Panc1 (cell line): ENCODE measurements at regions of chr11 and their contacts with region 1.

Region 1: GRCh38 chr11:25981998-25982397 is 349.9 kb upstream of the ANO3 start:
- DNase-seq: peak; percentile 24
- ATAC-seq: peak; percentile 81
- H3K4me3 ChIP-seq: no peak overlapping the region
- H3K27ac ChIP-seq: no peak overlapping the region
- H3K4me1 ChIP-seq: no peaks in the 10 kb centered on the region
- H3K27me3 ChIP-seq: no peaks in the 10 kb centered on the region
- CTCF ChIP-seq: peak; percentile 68

Region 2: DNA sequence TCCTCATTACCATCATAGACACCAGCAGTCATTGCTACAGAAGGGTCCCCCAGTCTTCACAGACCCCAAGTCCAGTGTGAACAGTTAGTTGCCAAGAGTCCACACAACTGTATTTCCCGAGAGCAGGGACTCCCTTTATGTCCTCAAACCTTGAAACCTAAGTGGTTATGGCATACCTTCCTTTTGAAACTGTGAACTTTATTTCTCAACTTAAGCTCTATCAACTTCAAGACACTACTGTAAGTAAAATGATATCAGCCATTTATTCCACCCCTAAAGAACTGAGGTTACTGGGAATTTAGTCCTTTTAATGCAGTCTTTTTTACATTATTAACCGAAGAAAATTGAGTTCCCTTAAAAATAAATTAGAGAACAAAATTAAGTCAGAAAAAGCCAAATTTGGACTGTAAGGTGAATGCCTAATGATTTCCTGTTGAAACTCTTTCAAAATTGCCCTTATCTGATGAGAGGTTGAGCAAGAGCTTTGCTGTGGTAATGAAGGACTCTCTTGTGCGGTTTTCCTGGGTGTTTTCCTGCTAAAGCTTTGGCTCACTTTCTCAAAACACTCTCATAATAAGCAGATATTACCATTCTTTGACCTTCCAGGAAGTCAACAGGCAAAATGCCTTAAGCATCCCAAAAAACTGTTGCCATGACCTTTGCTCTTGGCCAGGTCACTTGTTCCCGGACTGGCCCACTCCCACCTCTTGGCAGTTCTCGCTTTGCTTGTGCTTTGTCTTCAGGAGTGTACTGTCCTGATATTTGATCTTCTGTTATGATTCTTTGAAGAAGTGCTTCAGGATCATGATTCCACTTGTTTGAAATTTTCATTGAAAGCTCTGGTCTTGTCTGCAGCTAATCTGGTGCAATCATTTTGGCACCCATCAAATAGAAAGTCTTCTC is 415.4 kb before region 1 on chr11:
- CTCF ChIA-PET with region 1: no interaction called
- POLR2A ChIA-PET with region 1: no interaction called
- in situ Hi-C with region 1: no loop called
- intact Hi-C with region 1: no loop called
- DNase-seq: no peak
- ATAC-seq: no peak
- H3K4me3 ChIP-seq: no peak overlapping the region
- H3K27ac ChIP-seq: no peak overlapping the region
- H3K4me1 ChIP-seq: no peaks in the 10 kb centered on the region
- H3K27me3 ChIP-seq: no peaks in the 10 kb centered on the region
- CTCF ChIP-seq: no peak

Region 3: DNA sequence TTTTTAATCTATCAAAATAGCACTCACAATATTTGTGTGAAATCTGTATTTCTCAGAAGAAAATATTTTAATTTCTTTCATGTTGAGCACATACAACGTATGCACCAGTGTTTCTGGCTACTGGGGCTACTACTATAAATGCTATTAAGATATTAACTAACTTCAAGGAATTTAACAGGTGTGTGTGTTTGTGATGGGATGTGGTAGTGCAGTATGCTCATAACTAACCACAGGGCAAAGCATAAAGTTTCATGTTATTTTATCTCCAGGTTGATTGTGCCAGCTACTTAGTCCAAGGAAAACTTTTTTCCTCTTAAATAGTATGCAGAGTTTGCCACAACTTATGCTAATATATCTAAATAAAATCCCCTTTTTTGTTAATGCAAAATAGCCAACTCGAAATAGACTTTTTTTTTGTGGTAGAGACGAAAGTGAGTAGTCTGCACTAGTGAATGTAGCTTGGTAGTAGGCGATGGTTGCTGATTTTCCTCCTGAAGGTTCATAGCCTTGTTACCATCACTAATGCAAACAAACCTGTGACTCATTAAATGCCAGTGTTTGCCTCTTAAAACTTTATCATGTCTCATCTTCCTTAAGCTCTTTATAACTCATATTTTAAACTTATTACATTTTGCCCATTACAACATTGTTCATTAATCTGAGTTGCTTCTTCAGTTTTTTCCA is 215.5 kb before region 1 on chr11:
- CTCF ChIA-PET with region 1: no interaction called
- POLR2A ChIA-PET with region 1: no interaction called
- in situ Hi-C with region 1: no loop called
- intact Hi-C with region 1: no loop called
- DNase-seq: no peak
- ATAC-seq: no peak
- H3K4me3 ChIP-seq: no peak overlapping the region
- H3K27ac ChIP-seq: no peak overlapping the region
- H3K4me1 ChIP-seq: no peaks in the 10 kb centered on the region
- H3K27me3 ChIP-seq: no peaks in the 10 kb centered on the region
- CTCF ChIP-seq: no peak

Region 4: DNA sequence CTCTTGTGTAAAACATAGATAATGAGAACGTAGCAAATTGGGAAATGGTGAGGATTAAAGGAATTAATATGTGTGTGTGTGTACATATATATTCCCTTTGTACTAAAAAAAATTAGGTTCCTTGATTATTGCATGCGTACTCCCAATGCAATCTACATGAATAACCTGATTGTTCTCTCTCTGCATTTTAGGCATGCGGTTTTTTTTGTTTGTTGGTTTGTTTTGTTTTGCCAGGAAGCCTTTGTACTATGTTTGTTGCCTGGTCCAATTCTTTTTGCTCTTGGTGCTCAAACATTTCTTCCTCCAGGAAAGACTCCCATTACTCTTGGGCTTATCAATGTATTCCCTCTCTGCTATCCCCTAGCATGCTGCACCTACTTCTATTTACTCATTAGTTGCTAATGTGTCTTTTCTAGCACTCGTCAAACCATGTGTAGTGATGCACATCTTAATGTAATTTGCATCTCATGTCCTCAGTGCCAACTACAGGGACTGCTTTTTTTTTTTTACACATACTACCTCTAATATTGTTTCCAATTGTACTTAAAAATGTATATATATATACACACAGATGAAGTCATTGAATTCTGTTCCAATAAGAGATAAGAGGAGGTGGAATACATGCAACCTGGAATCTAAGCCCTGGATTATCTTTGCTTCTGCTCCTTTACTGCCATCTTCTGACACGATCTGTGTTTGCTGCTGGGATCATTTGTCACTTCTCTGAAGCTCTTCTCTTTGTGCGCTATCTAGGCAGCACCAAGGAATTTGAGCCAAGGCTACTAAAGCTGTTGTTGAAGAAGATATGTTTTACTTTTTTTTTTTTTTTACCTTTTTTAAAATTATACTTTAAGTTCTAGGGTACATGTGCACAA is 152.7 kb after region 1 on chr11:
- CTCF ChIA-PET with region 1: interaction called, 5 read pairs
- POLR2A ChIA-PET with region 1: no interaction called
- in situ Hi-C with region 1: no loop called
- intact Hi-C with region 1: loop called (anchors 5 kb)
- DNase-seq: no peak
- ATAC-seq: no peak
- H3K4me3 ChIP-seq: no peak overlapping the region
- H3K27ac ChIP-seq: no peak overlapping the region
- H3K4me1 ChIP-seq: no peaks in the 10 kb centered on the region
- H3K27me3 ChIP-seq: no peaks in the 10 kb centered on the region
- CTCF ChIP-seq: peak; percentile 36

Region 5: DNA sequence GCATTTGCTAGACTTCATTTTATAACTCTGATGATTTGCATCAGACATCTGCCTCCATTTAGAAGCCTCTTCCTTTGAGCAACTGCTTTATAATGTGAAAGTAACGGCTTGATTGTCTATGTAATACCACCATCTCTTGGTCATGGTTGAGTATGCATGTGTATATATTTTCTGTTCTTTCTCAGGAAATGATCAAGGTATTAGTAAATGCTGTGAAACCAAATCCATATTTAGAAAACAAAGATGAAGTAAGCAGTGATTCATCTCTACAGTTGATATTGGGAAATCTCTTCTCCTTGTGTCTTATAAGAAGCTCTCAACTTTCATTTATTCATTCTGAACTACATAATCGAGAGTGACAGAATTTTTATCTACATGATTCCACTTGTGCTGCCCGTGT is 245.3 kb after region 1 on chr11:
- CTCF ChIA-PET with region 1: no interaction called
- POLR2A ChIA-PET with region 1: no interaction called
- in situ Hi-C with region 1: no loop called
- intact Hi-C with region 1: loop called (anchors 1 kb)
- DNase-seq: peak; percentile 65
- ATAC-seq: no peak
- H3K4me3 ChIP-seq: no peak overlapping the region
- H3K27ac ChIP-seq: no peak overlapping the region
- H3K4me1 ChIP-seq: no peaks in the 10 kb centered on the region
- H3K27me3 ChIP-seq: no peaks in the 10 kb centered on the region
- CTCF ChIP-seq: peak; percentile 16; the same call in 1 of the 2 replicates

Region 6: GRCh38 chr11:26276798-26277424 is 294.9 kb after region 1 on chr11:
- CTCF ChIA-PET with region 1: no interaction called
- POLR2A ChIA-PET with region 1: no interaction called
- in situ Hi-C with region 1: no loop called
- intact Hi-C with region 1: loop called (anchors 1 kb)
- DNase-seq: peak; percentile 65
- ATAC-seq: peak; percentile 76
- H3K4me3 ChIP-seq: no peak overlapping the region
- H3K27ac ChIP-seq: no peak overlapping the region
- H3K4me1 ChIP-seq: no peaks in the 10 kb centered on the region
- H3K27me3 ChIP-seq: no peaks in the 10 kb centered on the region
- CTCF ChIP-seq: peak; percentile 93